Psoas muscle (tissue), 8 donors: ENCODE measurements at regions of chr15 and their contacts with region 1.

Region 1: DNA sequence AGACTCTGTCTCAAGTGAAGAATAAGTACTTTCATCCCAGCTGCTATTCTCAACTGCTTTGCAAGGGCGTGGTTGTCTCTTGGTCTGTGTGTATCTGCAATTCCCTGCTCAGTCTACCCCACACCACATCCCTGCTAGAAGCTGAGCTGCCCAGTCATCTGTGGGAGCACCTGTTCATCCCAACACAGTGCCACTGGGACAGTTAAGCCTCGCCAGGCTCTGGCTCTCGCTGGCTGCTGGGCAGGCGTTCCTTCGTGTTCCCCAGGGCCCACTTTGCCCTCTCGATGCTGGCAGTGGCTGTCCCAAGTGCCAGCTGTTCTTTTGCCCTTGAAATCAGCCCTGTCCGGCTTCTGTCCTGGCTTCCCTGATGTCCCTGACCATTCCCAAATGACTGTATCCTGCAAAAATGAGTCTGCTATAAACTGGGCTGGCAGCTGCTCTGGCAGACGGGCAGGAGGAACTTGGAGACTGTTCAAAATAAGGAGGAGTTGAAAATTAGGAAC is 91.6 kb upstream of the KLHL25 start:
- DNase-seq: peak; percentile 70 to 89
- ATAC-seq: peak; percentile 97 to 99 (median 98)
- H3K4me3 ChIP-seq: no peak overlapping the region
- H3K27ac ChIP-seq: peak overlapping the region; percentile 74
- H3K4me1 ChIP-seq: peaks cover 12% of the 10 kb centered on the region
- H3K27me3 ChIP-seq: no peaks in the 10 kb centered on the region
- CTCF ChIP-seq: no peak

Region 2: DNA sequence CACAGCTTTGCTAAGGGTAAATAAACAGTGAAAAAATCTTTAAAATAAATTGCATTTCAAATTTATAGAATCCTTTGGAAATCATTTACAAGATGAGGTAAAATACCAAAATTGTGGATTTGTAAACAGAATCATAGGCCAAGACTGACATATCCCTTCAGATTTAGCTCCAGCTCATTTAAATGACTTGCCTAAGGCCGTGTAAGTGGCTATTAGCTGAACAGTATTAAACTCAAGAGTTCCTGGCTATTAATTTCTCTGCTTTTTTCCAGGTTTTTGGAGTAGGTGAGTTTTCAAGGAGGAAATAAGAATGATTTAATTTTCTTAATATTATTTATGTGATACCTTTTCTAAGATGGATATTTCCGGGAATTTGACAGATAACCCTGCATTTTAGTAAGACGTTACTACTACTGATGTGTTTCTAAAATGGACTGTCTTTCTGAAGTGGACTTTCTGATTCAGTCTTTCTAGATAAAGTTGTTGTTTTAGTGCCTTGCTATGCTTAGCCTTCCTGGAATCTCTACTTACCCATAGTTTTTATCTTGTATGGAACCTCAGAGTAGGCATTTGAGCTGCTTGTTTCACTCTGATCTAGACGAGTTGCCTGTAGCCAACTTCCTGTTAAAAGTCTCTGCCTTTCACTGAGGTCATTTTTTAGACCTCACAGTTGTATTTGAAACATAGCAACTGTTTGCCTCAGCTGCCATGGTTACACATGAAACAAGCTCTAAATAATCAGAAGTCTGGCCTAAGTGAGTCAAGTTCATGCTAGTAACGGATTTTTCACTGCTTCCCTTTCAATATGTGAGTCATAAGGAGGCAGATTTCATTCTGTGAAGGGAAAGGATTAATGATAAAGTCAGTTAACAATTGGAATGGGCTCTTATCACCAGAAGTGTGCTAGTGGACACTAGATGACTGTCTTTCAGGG is 218.6 kb before region 1 on chr15:
- intact Hi-C with region 1: no loop called
- DNase-seq: no peak
- ATAC-seq: peak; percentile 46 to 78 (median 52)
- H3K4me3 ChIP-seq: no peak overlapping the region
- H3K27ac ChIP-seq: peak overlapping the region; percentile 52
- H3K4me1 ChIP-seq: peaks cover 13% of the 10 kb centered on the region
- H3K27me3 ChIP-seq: no peaks in the 10 kb centered on the region
- CTCF ChIP-seq: no peak

Region 3: DNA sequence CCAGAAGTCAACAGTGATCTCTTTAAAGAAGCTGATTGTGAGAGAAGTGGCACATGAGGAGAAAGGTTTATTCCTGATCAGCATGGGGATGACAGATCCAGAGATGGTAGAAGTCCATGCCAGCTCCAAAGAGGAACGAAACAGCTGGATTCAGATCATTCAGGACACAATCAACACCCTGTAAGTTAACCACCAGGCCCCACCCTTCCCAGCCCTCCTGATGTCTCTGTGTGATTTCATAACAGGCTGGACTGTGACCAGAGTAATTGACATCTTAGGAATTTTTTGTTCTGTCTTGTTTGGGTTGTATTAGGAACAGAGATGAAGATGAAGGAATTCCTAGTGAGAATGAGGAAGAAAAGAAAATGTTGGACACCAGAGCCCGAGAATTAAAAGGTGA is 159.3 kb before region 1 on chr15:
- intact Hi-C with region 1: no loop called
- DNase-seq: no peak
- ATAC-seq: peak in 3 of 4 donors; percentile 28 to 34 (median 32)
- H3K4me3 ChIP-seq: no peak overlapping the region
- H3K27ac ChIP-seq: peak overlapping the region; percentile 1
- H3K4me1 ChIP-seq: peaks cover 4% of the 10 kb centered on the region
- H3K27me3 ChIP-seq: no peaks in the 10 kb centered on the region
- CTCF ChIP-seq: no peak

Region 4: DNA sequence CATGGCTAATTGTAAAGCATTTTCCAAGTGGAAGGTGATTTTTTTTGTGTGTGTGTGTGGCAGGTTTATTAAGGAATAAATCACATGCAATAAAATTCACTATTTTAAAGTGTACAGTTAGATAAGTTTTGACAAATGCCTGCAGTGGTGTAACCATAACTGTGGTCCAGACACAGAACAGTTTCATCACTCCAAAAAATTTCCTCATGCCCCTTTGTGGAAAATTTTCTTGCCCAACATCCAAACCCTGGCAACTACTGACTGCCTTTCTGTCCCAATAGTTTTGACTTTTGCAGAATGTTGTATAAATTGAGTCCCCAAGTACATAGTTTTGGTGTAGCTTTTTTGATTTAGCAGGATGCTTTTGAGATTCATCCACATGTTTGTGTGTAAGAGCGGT is 43.4 kb after region 1 on chr15:
- intact Hi-C with region 1: loop called in 1 of 2 experiments (anchors 5 kb)
- DNase-seq: no peak
- ATAC-seq: no peak
- H3K4me3 ChIP-seq: no peak overlapping the region
- H3K27ac ChIP-seq: no peak overlapping the region
- H3K4me1 ChIP-seq: no peaks in the 10 kb centered on the region
- H3K27me3 ChIP-seq: no peaks in the 10 kb centered on the region
- CTCF ChIP-seq: no peak